ENCODE measurements at regions of chr3 and their contacts with region 1.

Region 1: DNA sequence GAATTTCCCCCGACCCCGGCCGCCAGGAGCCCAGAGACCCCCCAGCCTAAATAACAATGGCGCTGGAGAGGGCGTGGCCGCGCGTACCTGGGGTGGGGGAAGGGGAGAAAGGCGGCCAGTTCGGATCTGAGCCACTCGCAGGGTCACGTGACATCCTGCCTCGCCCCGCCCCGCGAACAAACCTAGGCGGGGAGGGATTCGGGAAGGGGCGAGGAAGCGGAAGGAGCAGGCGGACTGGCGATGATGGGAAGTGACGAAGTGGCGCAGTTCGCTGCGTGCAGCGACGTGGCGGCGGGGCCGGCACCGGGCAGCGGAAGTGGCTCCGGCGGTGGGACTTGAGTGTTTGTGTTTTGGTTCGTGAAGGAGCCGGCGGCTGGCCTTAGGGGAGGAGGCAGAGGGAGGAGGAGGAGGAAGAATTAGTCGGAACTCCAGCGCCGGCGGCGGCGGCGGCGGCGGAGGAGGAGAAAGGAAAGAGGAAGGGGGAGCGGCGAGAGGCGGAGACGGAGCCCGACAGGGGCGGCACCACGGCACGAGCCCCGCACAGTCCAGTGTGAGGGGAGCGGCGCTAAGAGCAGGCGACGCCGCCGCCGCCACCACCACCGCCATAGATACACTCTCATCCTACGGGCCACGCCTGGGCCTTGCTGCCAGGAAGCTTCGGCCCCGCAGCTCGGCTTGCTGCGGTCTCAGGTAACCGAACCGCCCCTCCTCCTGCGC is at the start of gene RAB5A:
- DNase-seq: peak; percentile 99
- ATAC-seq: peak; percentile 85
- H3K4me3 ChIP-seq: peak within 1 kb of the TSS; percentile 71 to 95 (median 87)
- H3K4me3 Mint-ChIP-seq: peak within 1 kb of the TSS; percentile 93
- H3K27ac ChIP-seq: peak within 1 kb of the TSS; percentile 96 to 98
- H3K27ac Mint-ChIP-seq: peak within 1 kb of the TSS; percentile 97
- H3K4me1 ChIP-seq: peaks cover 18 to 22% of the 10 kb centered on the region in 2 donors
- H3K4me1 Mint-ChIP-seq: peaks cover 47% of the 10 kb centered on the region
- H3K27me3 ChIP-seq: no peaks in the 10 kb centered on the region
- H3K27me3 Mint-ChIP-seq: no peaks in the 10 kb centered on the region
- CTCF ChIP-seq: no peak
- total RNA-seq, gene RAB5A: 59.4 and 61.9 TPM in 2 replicates

Region 2: DNA sequence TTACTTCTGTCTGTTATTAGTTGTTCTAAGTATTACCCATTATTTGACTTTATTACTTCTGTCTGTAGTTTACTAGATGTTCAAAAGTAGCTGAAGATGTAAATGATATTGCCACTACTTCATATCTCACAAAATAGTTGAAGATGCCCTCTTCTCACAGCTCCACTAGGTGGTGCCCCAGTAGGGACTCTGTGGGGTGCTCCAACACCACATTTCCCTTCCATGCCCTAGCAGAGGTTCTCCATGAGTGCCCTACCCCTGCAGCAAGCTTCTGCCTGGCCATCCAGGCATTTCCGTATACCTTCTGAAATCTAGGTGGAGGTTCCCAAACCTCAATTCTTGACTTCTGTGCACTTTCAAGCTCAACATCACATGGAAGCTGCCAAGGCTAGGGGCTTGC is 717.9 kb before region 1 on chr3:
- CTCF ChIA-PET with region 1: no interaction called
- POLR2A ChIA-PET with region 1: no interaction called
- intact Hi-C with region 1: loop called (anchors 10 kb)
- DNase-seq: peak; percentile 12
- ATAC-seq: no peak
- H3K4me3 ChIP-seq: peak overlapping the region in 2 of 5 experiments; percentile 13 to 41
- H3K4me3 Mint-ChIP-seq: peak overlapping the region; percentile 69
- H3K27ac ChIP-seq: peak overlapping the region in 1 of 2 donors; percentile 58
- H3K27ac Mint-ChIP-seq: peak overlapping the region; percentile 93
- H3K4me1 ChIP-seq: peaks cover 16% of the 10 kb centered on the region in 2 donors
- H3K4me1 Mint-ChIP-seq: peaks cover 20% of the 10 kb centered on the region
- H3K27me3 ChIP-seq: no peaks in the 10 kb centered on the region
- H3K27me3 Mint-ChIP-seq: peaks cover 4% of the 10 kb centered on the region
- CTCF ChIP-seq: no peak

Region 3: DNA sequence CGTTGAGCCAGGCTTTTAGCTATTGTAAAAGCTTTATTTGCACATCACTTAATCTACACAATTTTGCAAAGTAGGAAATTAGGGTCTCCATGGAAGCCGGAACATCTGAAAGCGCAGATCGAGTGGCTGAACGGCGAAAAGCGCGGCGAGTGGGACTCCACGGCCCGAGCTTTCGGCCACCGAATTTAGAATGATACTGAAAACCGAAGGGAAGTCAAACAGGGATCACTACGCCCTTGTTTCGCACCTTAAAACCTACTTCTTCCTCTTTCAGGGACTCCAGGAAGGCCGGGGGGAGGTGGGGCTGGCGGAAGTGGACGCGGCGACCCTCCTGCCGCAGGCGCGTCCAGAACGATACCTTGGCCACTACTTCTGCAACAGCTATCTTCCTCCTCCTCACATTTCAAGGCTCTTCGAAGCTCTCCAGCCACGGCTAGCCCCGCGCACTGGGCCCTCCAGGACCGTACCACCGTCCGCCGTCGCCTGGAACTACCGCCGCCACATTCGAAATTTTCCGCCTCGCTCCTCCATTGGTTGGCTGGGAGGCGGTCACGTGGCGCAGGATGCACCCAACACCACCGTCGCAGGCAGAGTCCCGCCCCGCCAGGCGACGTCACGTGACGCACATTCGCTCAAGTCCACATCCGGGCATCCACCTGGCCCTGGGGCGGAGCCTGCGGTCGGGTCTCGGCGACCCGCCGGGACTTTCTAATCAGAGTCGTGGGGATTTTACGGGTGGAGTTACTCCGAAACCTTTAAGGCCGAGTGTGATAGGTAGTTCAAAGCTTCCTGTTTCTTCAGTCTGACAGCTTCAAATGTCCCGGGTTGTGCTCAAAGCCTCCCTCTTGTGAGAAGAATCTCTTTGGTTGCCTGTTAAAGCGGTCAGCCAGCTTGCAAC is 239.0 kb after region 1 on chr3 and contains the start of gene SGO1:
- CTCF ChIA-PET with region 1: no interaction called
- POLR2A ChIA-PET with region 1: no interaction called
- intact Hi-C with region 1: loop called (anchors 1 kb)
- DNase-seq: peak; percentile 100
- ATAC-seq: peak; percentile 91
- H3K4me3 ChIP-seq: peak within 1 kb of the TSS; percentile 70 to 97 (median 85)
- H3K4me3 Mint-ChIP-seq: no peak within 1 kb of the TSS
- H3K27ac ChIP-seq: peak within 1 kb of the TSS; percentile 98
- H3K27ac Mint-ChIP-seq: no peak within 1 kb of the TSS
- H3K4me1 ChIP-seq: peaks cover 19 to 26% of the 10 kb centered on the region in 2 donors
- H3K4me1 Mint-ChIP-seq: peaks cover 4% of the 10 kb centered on the region
- H3K27me3 ChIP-seq: no peaks in the 10 kb centered on the region
- H3K27me3 Mint-ChIP-seq: no peaks in the 10 kb centered on the region
- CTCF ChIP-seq: no peak
- total RNA-seq, gene SGO1: 6.4 and 6.7 TPM in 2 replicates

Measured in B cell (primary cell).